ENCODE measurements at regions of chr10 and their contacts with region 1.

Region 1: DNA sequence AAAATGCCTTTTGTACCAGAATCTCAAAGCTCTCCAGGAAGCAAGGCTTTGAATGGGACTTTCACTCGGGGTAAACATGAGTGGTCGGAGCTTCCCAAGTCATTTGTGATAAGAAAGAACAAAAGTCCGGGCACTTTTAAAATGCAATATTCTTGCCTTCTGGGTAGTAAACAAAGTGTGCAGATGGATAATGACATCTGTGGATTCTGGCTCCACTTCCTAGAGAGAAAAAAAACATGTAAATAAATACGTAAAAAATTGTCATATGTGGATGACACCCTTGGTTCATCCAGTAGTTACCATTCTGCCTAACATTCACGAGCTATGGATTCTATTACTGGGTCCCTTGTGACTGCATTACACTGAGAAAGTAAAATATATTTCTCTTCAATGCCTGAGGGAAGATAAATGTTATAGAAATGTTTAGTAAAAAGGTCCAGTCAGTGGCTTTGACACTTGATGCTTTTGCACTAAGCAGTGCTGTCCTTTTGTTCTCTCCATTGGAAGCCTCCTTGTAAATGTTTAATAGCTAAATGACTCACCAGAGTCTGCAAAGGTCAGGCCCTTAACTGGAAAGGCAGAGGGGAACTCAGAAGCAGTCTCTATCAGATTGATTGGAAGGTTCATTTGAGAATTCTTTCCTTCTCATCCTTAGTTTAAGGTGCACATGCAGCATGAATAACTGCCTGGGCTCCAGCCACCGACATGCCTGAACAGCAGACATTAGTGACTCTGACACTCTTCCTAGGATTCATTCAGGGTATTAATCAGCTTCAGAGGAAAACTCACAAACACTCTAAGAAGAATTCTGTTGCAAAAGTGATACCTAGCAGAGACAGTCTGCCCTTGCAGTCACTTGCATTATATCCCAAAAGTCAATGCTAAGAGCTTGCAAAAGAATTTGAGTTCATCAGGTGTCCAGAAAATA is 11.7 kb upstream of the EDRF1 start:
- DNase-seq: peak; percentile 46
- ATAC-seq: peak; percentile 94
- H3K4me3 ChIP-seq: no peak overlapping the region
- H3K27ac ChIP-seq: no peak overlapping the region
- H3K4me1 ChIP-seq: peaks cover 34% of the 10 kb centered on the region
- H3K27me3 ChIP-seq: no peaks in the 10 kb centered on the region
- CTCF ChIP-seq: no peak
- EP300 ChIP-seq: no peak
- POLR2A ChIP-seq: no peak
- RAD21 ChIP-seq: no peak

Region 2: GRCh38 chr10:125719146-125720001 is 11.6 kb after region 1 on chr10 and contains the start of gene EDRF1:
- CTCF ChIA-PET with region 1: no interaction called
- POLR2A ChIA-PET with region 1: interaction called, 11 read pairs
- in situ Hi-C with region 1: no loop called
- intact Hi-C with region 1: no loop called
- DNase-seq: peak; percentile 97
- ATAC-seq: peak; percentile 94
- H3K4me3 ChIP-seq: peak within 1 kb of the TSS; percentile 76 to 92 (median 87)
- H3K27ac ChIP-seq: peak within 1 kb of the TSS; percentile 78
- H3K4me1 ChIP-seq: peaks cover 25% of the 10 kb centered on the region
- H3K27me3 ChIP-seq: no peaks in the 10 kb centered on the region; a peak in 1 of 5 replicates
- CTCF ChIP-seq: no peak
- EP300 ChIP-seq: no peak
- POLR2A ChIP-seq: peak; percentile 95 to 96
- RAD21 ChIP-seq: 0 out of 2 replicates have a peak, but pooled peaks have one; percentile 17
- total RNA-seq, gene EDRF1: 24.9 and 26.7 TPM in 2 replicates